ENCODE measurements at regions of chr2 and their contacts with region 1.

Region 1: GRCh38 chr2:25851740-25852503 is 26.4 kb downstream of the ASXL2 start:
- DNase-seq: peak; percentile 73
- H3K4me3 Mint-ChIP-seq: no peak overlapping the region
- H3K27ac Mint-ChIP-seq: no peak overlapping the region
- H3K4me1 Mint-ChIP-seq: peaks cover 20% of the 10 kb centered on the region
- H3K27me3 Mint-ChIP-seq: no peaks in the 10 kb centered on the region
- CTCF ChIP-seq: peak; percentile 68

Region 2: GRCh38 chr2:25822190-25823117 is 29.5 kb before region 1 on chr2:
- CTCF ChIA-PET with region 1: interaction called, 10 read pairs
- POLR2A ChIA-PET with region 1: interaction called, 3 read pairs
- intact Hi-C with region 1: no loop called
- DNase-seq: peak; percentile 12
- H3K4me3 Mint-ChIP-seq: no peak overlapping the region
- H3K27ac Mint-ChIP-seq: no peak overlapping the region
- H3K4me1 Mint-ChIP-seq: peaks cover 12% of the 10 kb centered on the region
- H3K27me3 Mint-ChIP-seq: no peaks in the 10 kb centered on the region
- CTCF ChIP-seq: no peak

Region 3: GRCh38 chr2:25867396-25868003 is 15.6 kb after region 1 on chr2:
- CTCF ChIA-PET with region 1: interaction called, 75 read pairs
- POLR2A ChIA-PET with region 1: interaction called, 5 read pairs
- intact Hi-C with region 1: no loop called
- DNase-seq: no peak
- H3K4me3 Mint-ChIP-seq: no peak overlapping the region
- H3K27ac Mint-ChIP-seq: no peak overlapping the region
- H3K4me1 Mint-ChIP-seq: no peaks in the 10 kb centered on the region
- H3K27me3 Mint-ChIP-seq: no peaks in the 10 kb centered on the region
- CTCF ChIP-seq: no peak

Region 4: DNA sequence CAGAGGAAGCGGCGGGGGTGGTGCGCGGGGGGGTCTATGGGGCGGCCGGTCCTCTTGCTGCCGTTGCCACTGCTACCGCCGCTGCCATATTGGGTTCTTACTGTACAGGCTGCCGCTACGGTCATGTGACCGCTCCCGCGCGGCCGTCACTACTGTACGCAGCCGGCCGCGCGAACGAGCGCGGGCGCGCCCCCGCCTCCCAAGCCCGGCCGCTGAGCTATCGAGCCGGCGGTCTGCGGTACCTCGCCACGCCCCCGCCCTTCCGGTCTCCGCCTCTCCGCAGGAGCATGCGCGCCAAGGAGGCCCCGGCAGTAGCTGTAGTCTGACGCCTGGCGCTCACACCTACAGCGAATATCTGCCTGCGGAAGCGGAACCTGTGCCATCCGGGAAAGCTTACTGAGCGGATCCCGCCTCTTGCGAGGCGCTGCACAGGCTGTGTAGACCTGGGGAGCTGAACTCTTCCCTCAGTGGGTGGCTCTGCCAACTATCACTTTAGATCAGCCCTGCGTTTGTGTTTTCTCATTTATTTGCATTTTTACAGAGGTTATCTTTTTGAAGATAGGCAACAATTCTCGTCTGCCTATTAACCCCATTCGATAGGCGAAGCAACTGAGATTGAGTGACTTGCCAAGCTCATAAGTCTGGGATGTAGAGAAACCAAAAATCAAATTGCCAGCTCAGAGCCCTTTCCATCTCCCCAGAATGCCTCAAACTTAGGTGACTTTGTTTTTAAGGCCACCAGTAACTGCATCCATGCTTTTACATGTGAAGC is 26.6 kb after region 1 on chr2 and contains the start of gene ASXL2:
- CTCF ChIA-PET with region 1: interaction called, 18 read pairs
- POLR2A ChIA-PET with region 1: interaction called, 18 read pairs
- intact Hi-C with region 1: no loop called
- DNase-seq: peak; percentile 95
- H3K4me3 Mint-ChIP-seq: peak within 1 kb of the TSS; percentile 95
- H3K27ac Mint-ChIP-seq: peak within 1 kb of the TSS; percentile 83
- H3K4me1 Mint-ChIP-seq: peaks cover 28% of the 10 kb centered on the region
- H3K27me3 Mint-ChIP-seq: no peaks in the 10 kb centered on the region
- CTCF ChIP-seq: no peak
- total RNA-seq, gene ASXL2: 34.0 and 35.3 TPM in 2 replicates

Region 5: GRCh38 chr2:26144953-26145680 is 293.2 kb after region 1 on chr2:
- CTCF ChIA-PET with region 1: interaction called, 10 read pairs
- POLR2A ChIA-PET with region 1: interaction called, 4 read pairs
- intact Hi-C with region 1: loop called (anchors 1 kb)
- DNase-seq: peak; percentile 74
- H3K4me3 Mint-ChIP-seq: no peak overlapping the region
- H3K27ac Mint-ChIP-seq: peak overlapping the region; percentile 72
- H3K4me1 Mint-ChIP-seq: peaks cover 6% of the 10 kb centered on the region
- H3K27me3 Mint-ChIP-seq: peaks cover 6% of the 10 kb centered on the region
- CTCF ChIP-seq: peak; percentile 84